Heart right ventricle (tissue), 16 donors: ENCODE measurements at regions of chr15 and their contacts with region 1.

Region 1: DNA sequence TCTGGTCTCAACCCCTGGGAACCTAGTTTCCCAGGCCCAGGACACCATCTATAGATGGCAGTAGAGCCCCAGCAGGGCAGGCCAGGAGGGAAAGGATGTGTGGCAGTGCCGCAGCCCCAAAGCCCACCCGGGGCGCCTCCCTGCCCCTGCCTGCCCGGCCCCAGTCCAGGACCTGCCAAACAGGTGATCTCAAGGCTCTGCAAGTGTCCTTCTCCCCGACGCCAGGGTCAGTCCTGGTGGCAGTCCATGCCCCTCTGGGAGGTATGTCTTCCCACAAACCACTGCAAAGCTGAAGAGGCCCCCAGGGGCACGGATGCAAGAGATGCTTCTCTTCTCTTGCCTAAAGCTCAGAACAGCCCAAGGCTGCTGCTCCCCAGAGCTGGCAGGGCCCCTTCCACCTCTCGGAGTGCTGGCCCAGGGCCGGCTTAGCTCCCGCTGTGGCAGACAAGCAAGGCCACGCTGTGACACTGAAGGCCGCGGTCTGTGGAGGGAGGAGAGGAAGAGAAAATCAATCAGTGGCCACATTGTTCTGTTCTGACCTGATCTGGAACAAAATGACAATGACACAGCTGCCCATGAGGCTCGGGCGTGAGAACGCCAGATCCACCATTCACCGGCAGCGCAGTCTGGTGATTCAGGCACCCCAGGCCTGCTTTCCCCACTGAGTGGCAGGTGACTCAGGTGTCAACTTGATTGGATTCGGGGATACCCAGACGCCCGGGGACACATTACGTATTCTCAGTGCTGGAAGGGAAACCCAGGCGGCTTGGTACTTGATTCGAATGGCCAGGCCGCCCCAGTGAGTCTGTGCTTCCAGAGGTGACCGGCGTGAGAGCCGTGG is 34.0 kb downstream of the KLHL25 start:
- DNase-seq: no peak
- ATAC-seq: peak in 2 of 8 donors; percentile 10 to 12
- H3K4me3 ChIP-seq: no peak overlapping the region
- H3K27ac ChIP-seq: no peak overlapping the region
- H3K4me1 ChIP-seq: peaks cover 26 to 83% (median 55%) of the 10 kb centered on the region in 9 donors
- H3K27me3 ChIP-seq: no peaks in the 10 kb centered on the region
- CTCF ChIP-seq: peak in 6 of 9 donors; percentile 19 to 39 (median 32)

Region 2: GRCh38 chr15:85718271-85718971 is 42.3 kb before region 1 on chr15:
- intact Hi-C with region 1: no loop called
- DNase-seq: no peak
- ATAC-seq: no peak
- H3K4me3 ChIP-seq: no peak overlapping the region
- H3K27ac ChIP-seq: peak overlapping the region in 4 of 10 donors; percentile 33 to 70 (median 54)
- H3K4me1 ChIP-seq: peaks cover 0 to 84% (median 28%) of the 10 kb centered on the region in 9 donors
- H3K27me3 ChIP-seq: no peaks in the 10 kb centered on the region
- CTCF ChIP-seq: no peak

Region 3: GRCh38 chr15:85730001-85730820 is 30.5 kb before region 1 on chr15:
- intact Hi-C with region 1: no loop called
- DNase-seq: peak in 1 of 2 donors; percentile 60
- ATAC-seq: peak; percentile 35 to 74 (median 56)
- H3K4me3 ChIP-seq: no peak overlapping the region
- H3K27ac ChIP-seq: peak overlapping the region in 4 of 10 donors; percentile 5 to 78 (median 38)
- H3K4me1 ChIP-seq: peaks cover 0 to 34% (median 22%) of the 10 kb centered on the region in 9 donors
- H3K27me3 ChIP-seq: no peaks in the 10 kb centered on the region
- CTCF ChIP-seq: peak; percentile 54 to 81 (median 75)

Region 4: DNA sequence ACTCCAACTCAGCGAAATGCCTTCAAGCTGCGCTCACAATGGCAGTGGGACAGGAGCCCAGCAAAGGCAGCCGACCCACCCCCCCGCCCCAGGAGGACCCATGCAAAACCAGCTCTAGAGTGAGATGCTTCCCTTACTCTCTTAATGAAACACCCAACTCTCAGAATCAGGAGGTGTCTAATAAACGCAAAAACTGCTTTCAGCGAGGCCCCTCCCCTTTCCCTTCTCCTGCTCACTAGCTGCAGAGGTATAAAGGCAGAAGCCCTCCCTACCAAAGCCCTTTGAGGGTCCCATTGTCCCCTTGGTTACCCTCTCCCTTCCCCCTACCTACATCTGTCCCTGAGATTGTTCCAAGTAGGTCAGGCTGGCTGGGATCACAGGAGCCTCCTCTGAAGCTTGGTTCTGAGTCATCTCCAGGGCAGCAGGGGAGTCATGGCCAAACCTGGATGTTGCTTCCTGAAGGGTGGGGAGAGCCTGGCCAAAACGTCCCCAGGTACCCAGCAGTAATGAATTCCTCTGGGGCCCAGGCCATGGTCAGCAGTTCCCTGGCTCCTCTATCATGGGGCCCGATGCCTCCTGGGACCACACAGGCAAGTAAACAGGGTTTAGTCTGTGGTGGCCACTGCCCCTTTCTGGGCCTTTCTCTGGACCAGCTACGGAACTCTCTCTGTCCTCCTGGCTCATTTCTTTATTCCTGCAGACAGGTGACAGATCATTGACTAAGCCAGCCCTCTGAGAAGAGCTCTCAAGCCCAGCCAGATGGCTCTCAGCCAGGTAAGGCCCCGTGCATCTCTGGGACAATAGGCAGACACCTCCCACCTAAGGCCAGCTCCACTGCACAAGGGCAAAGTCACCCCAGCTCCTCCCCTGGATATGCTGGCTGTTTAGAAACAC is 25.4 kb after region 1 on chr15:
- intact Hi-C with region 1: no loop called
- DNase-seq: peak; percentile 40 to 52
- ATAC-seq: peak; percentile 44 to 89 (median 76)
- H3K4me3 ChIP-seq: peak overlapping the region in 1 of 10 donors; percentile 4
- H3K27ac ChIP-seq: peak overlapping the region in 9 of 10 donors; percentile 1 to 58 (median 43)
- H3K4me1 ChIP-seq: peaks cover 9 to 32% (median 25%) of the 10 kb centered on the region in 9 donors
- H3K27me3 ChIP-seq: no peaks in the 10 kb centered on the region
- CTCF ChIP-seq: no peak

Region 5: GRCh38 chr15:85800467-85801123 is 39.8 kb after region 1 on chr15:
- intact Hi-C with region 1: loop called in 1 of 10 experiments (anchors 5 kb)
- DNase-seq: peak; percentile 47 to 70
- ATAC-seq: peak; percentile 71 to 95 (median 87)
- H3K4me3 ChIP-seq: no peak overlapping the region
- H3K27ac ChIP-seq: no peak overlapping the region
- H3K4me1 ChIP-seq: peaks cover 0 to 19% (median 3%) of the 10 kb centered on the region in 9 donors
- H3K27me3 ChIP-seq: no peaks in the 10 kb centered on the region
- CTCF ChIP-seq: peak in 5 of 9 donors; percentile 16 to 50 (median 48)

Region 6: GRCh38 chr15:85825692-85826091 is 64.9 kb after region 1 on chr15:
- intact Hi-C with region 1: loop called in 2 of 10 experiments (anchors 5 to 10 kb)
- DNase-seq: no peak
- ATAC-seq: peak in 1 of 8 donors; percentile 41
- H3K4me3 ChIP-seq: no peak overlapping the region
- H3K27ac ChIP-seq: no peak overlapping the region
- H3K4me1 ChIP-seq: no peaks in the 10 kb centered on the region
- H3K27me3 ChIP-seq: peaks cover 0 to 3% (median 0%) of the 10 kb centered on the region in 7 donors
- CTCF ChIP-seq: no peak